ENCODE measurements at regions of chr18 and their contacts with region 1.

Region 1: DNA sequence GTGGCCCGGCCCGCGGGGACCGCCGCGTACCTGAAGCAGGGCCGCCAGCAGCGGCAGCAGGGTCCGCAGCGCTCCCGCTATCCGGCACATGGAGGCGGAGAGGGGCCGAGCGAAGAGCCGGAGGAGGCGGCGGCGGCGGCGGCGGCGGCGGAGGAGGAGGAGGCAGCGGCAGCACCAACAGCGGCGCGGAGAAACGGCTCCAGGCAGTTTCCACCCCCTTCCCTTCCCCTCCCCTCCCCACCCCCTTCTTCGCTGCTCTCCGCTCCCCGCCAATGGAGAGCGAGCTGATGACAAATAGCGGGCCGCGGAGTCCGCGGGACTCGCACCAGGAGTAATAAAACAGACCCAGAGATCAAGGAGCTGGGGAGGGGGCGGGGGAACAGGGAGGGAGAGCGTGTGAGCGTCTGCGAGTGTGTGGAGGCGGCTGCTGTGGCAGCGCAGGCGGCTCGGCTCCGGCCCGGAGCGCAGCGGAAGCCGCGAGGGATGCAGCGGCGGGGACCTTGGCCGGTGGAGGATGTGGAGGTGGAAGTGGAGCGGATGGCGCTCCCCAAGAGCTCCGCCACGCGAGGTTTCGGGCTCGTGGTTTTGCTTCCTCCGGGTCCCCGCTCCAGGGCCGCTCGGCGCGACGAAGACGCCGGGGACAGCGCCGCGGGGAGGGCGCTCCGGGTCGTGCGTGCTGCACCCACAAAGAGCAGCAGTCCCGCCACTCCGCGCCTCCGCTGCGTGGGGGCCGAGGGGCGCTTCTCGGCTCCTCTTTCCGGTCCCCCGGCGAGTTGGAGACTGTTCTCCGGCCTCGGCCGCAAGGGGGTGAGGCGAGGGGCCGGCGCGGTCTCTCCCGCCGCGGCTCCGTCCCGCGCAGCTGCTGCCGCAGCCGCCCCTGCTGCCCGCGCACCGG is at the start of gene CDH2:
- DNase-seq: peak in 1 of 2 donors; percentile 72
- H3K4me3 ChIP-seq: peak within 1 kb of the TSS; percentile 70 to 89
- H3K27ac ChIP-seq: peak within 1 kb of the TSS; percentile 76 to 81
- H3K4me1 ChIP-seq: no peaks in the 10 kb centered on the region
- H3K27me3 ChIP-seq: no peaks in the 10 kb centered on the region
- CTCF ChIP-seq: peak in 2 of 3 experiments; percentile 21 to 35
- total RNA-seq, gene CDH2: 22.8 TPM

Region 2: DNA sequence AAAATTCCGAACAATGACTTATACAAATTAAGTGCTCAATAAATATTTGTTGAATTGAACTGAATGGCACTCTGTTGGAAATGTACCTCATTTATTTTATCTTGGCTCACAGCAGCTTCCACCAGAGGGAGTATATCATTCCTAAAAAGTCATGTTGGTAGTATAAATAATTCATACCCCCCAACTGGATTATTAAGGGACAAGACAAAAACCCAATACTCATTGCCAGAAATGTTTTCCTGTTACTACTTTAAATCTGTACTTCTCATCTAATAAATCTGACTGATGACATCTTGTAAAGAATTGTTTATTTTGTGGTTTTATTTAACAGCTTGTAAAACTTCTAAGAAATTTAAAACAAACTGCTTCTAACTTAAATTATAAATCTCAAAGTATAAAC is 164.1 kb before region 1 on chr18:
- intact Hi-C with region 1: loop called (anchors 5 kb)
- DNase-seq: no peak
- H3K4me3 ChIP-seq: no peak overlapping the region
- H3K27ac ChIP-seq: no peak overlapping the region
- H3K4me1 ChIP-seq: no peaks in the 10 kb centered on the region
- H3K27me3 ChIP-seq: no peaks in the 10 kb centered on the region
- CTCF ChIP-seq: peak in 1 of 3 experiments; percentile 31

Region 3: GRCh38 chr18:28059861-28060260 is 117.3 kb before region 1 on chr18:
- intact Hi-C with region 1: loop called (anchors 5 kb)
- DNase-seq: no peak
- H3K4me3 ChIP-seq: no peak overlapping the region
- H3K27ac ChIP-seq: no peak overlapping the region
- H3K4me1 ChIP-seq: peaks cover 0 to 3% of the 10 kb centered on the region in 2 donors
- H3K27me3 ChIP-seq: no peaks in the 10 kb centered on the region
- CTCF ChIP-seq: no peak

Region 4: GRCh38 chr18:28115149-28115550 is 62.0 kb before region 1 on chr18:
- intact Hi-C with region 1: loop called (anchors 2 kb)
- DNase-seq: no peak
- H3K4me3 ChIP-seq: no peak overlapping the region
- H3K27ac ChIP-seq: peak overlapping the region; percentile 7 to 60
- H3K4me1 ChIP-seq: peaks cover 7 to 16% of the 10 kb centered on the region in 2 donors
- H3K27me3 ChIP-seq: no peaks in the 10 kb centered on the region
- CTCF ChIP-seq: no peak

Region 5: GRCh38 chr18:29164993-29165599 is 987.9 kb after region 1 on chr18:
- intact Hi-C with region 1: loop called (anchors 5 kb)
- DNase-seq: no peak
- H3K4me3 ChIP-seq: no peak overlapping the region
- H3K27ac ChIP-seq: peak overlapping the region; percentile 54 to 68
- H3K4me1 ChIP-seq: peaks cover 0 to 17% of the 10 kb centered on the region in 2 donors
- H3K27me3 ChIP-seq: no peaks in the 10 kb centered on the region
- CTCF ChIP-seq: no peak